ENCODE measurements at regions of chr10 and their contacts with region 1.

Region 1: GRCh38 chr10:26334932-26335573 is 103.1 kb upstream of the APBB1IP start:
- DNase-seq: peak; percentile 45
- ATAC-seq: peak; percentile 92
- H3K4me3 Mint-ChIP-seq: peak overlapping the region; percentile 82
- H3K27ac Mint-ChIP-seq: no peak overlapping the region
- H3K4me1 Mint-ChIP-seq: peaks cover 9% of the 10 kb centered on the region
- H3K27me3 Mint-ChIP-seq: no peaks in the 10 kb centered on the region
- CTCF ChIP-seq: peak; percentile 89

Region 2: GRCh38 chr10:26437637-26438461 is 102.8 kb after region 1 on chr10 and contains the start of gene APBB1IP:
- CTCF ChIA-PET with region 1: no interaction called
- POLR2A ChIA-PET with region 1: interaction called, 6 read pairs
- intact Hi-C with region 1: loop called (anchors 1 kb)
- DNase-seq: peak; percentile 65
- ATAC-seq: peak; percentile 77
- H3K4me3 Mint-ChIP-seq: peak within 1 kb of the TSS; percentile 93
- H3K27ac Mint-ChIP-seq: peak within 1 kb of the TSS; percentile 96
- H3K4me1 Mint-ChIP-seq: peaks cover 52% of the 10 kb centered on the region
- H3K27me3 Mint-ChIP-seq: no peaks in the 10 kb centered on the region
- CTCF ChIP-seq: no peak
- total RNA-seq, gene APBB1IP: 79.1 and 85.5 TPM in 2 replicates

Region 3: GRCh38 chr10:26503911-26504310 is 168.9 kb after region 1 on chr10:
- CTCF ChIA-PET with region 1: interaction called, 22 read pairs
- POLR2A ChIA-PET with region 1: no interaction called
- intact Hi-C with region 1: loop called (anchors 1 kb)
- DNase-seq: no peak
- ATAC-seq: no peak
- H3K4me3 Mint-ChIP-seq: no peak overlapping the region
- H3K27ac Mint-ChIP-seq: peak overlapping the region; percentile 50
- H3K4me1 Mint-ChIP-seq: peaks cover 11% of the 10 kb centered on the region
- H3K27me3 Mint-ChIP-seq: no peaks in the 10 kb centered on the region
- CTCF ChIP-seq: no peak

Region 4: GRCh38 chr10:26697163-26697921 is 362.3 kb after region 1 on chr10 and contains the start of gene PDSS1:
- CTCF ChIA-PET with region 1: no interaction called
- POLR2A ChIA-PET with region 1: no interaction called
- intact Hi-C with region 1: loop called (anchors 10 kb)
- DNase-seq: peak; percentile 65
- ATAC-seq: peak; percentile 87
- H3K4me3 Mint-ChIP-seq: peak within 1 kb of the TSS; percentile 93
- H3K27ac Mint-ChIP-seq: peak within 1 kb of the TSS; percentile 84
- H3K4me1 Mint-ChIP-seq: peaks cover 27% of the 10 kb centered on the region
- H3K27me3 Mint-ChIP-seq: no peaks in the 10 kb centered on the region
- CTCF ChIP-seq: no peak
- total RNA-seq, gene PDSS1: 8.7 and 9.0 TPM in 2 replicates

Region 5: GRCh38 chr10:26790221-26790995 is 455.4 kb after region 1 on chr10:
- CTCF ChIA-PET with region 1: no interaction called
- POLR2A ChIA-PET with region 1: no interaction called
- intact Hi-C with region 1: no loop called
- DNase-seq: no peak
- ATAC-seq: no peak
- H3K4me3 Mint-ChIP-seq: no peak overlapping the region
- H3K27ac Mint-ChIP-seq: no peak overlapping the region
- H3K4me1 Mint-ChIP-seq: peaks cover 66% of the 10 kb centered on the region
- H3K27me3 Mint-ChIP-seq: no peaks in the 10 kb centered on the region
- CTCF ChIP-seq: no peak

Region 6: GRCh38 chr10:26881600-26882331 is 546.7 kb after region 1 on chr10:
- CTCF ChIA-PET with region 1: interaction called, 32 read pairs
- POLR2A ChIA-PET with region 1: interaction called, 4 read pairs
- intact Hi-C with region 1: loop called (anchors 1 kb)
- DNase-seq: no peak
- ATAC-seq: peak; percentile 75
- H3K4me3 Mint-ChIP-seq: no peak overlapping the region
- H3K27ac Mint-ChIP-seq: no peak overlapping the region
- H3K4me1 Mint-ChIP-seq: peaks cover 2% of the 10 kb centered on the region
- H3K27me3 Mint-ChIP-seq: peaks cover 11% of the 10 kb centered on the region
- CTCF ChIP-seq: no peak